Vagina (tissue), 2 donors: ENCODE measurements at regions of chr18 and their contacts with region 1.

Region 1: DNA sequence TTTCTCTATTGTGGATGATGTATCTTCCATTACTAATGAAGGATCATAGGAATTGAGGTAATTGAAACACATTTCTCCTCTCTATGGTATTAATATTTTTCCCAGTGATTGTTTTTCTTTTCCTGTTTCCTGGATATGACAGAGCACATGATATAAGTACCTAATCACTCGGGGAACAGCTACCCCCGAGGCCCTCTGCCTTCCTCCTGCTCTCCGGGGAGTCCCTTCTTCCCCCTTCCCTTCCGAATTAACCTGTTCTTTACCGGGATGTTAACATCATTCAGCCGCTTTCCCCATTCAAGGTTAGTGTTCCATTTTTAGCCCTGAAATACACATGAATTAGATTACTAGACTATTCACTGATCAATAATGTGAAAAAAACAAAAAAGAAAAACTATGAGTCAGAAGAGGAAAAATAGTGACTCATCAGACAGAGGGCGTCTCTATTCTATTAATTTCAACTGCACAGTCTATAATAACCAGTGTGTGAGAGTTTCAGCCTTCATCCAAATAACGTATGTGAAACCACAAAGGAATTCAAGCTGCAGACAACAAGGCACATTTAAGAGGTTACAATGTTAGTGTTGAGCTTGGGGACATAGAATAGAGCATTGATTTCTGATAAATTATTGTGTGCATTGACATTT is 450.8 kb downstream of the DLGAP1 start:
- DNase-seq: no peak
- H3K4me3 ChIP-seq: no peak overlapping the region
- H3K27ac ChIP-seq: no peak overlapping the region
- H3K4me1 ChIP-seq: no peaks in the 10 kb centered on the region
- H3K27me3 ChIP-seq: no peaks in the 10 kb centered on the region
- CTCF ChIP-seq: no peak
- POLR2A ChIP-seq: no peak

Region 2: GRCh38 chr18:3771121-3771971 is 233.0 kb before region 1 on chr18:
- intact Hi-C with region 1: loop called (anchors 10 kb)
- DNase-seq: peak in 1 of 2 donors; percentile 92
- H3K4me3 ChIP-seq: peak overlapping the region; percentile 21 to 34
- H3K27ac ChIP-seq: peak overlapping the region; percentile 54
- H3K4me1 ChIP-seq: peaks cover 6% of the 10 kb centered on the region
- H3K27me3 ChIP-seq: no peaks in the 10 kb centered on the region
- CTCF ChIP-seq: peak; percentile 78 to 91 (median 87)
- POLR2A ChIP-seq: no peak

Region 3: DNA sequence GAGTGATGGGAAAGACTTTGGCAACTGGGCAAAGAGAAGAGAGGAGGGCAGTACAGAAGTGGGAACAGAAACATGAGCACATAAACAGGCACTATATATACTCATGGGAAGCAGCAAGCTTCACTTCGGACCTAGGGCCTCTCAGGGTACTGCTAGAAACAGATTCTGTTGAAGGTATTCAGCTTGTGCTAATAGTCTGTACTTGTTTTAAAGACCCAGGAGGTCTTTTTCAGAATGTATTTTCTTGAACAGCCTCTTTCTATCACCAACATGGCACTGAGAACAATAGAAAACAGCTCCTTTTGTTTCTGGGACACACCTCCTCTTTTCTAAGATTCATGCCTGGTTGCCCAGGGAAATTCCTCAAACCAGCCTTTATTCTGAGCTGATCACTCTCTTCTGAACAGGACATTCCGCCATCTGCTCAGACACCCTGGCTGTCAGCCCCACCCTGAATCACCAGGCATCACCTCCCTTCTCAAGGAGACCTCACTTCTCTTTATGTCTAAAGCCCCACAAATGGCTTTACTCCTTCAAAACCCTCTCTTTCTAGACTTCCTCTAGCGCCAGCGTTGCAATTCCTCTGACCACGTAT is 164.7 kb before region 1 on chr18:
- intact Hi-C with region 1: no loop called
- DNase-seq: no peak
- H3K4me3 ChIP-seq: no peak overlapping the region
- H3K27ac ChIP-seq: no peak overlapping the region
- H3K4me1 ChIP-seq: no peaks in the 10 kb centered on the region
- H3K27me3 ChIP-seq: no peaks in the 10 kb centered on the region
- CTCF ChIP-seq: no peak
- POLR2A ChIP-seq: no peak